ENCODE measurements at regions of chr14 and their contacts with region 1.

Region 1: GRCh38 chr14:68787092-68787992 is 5.5 kb downstream of the ZFP36L1 start:
- DNase-seq: no peak
- ATAC-seq: no peak
- H3K4me3 ChIP-seq: no peak overlapping the region
- H3K27ac ChIP-seq: peak overlapping the region; percentile 68
- H3K4me1 ChIP-seq: peaks cover 18% of the 10 kb centered on the region
- H3K27me3 ChIP-seq: no peaks in the 10 kb centered on the region
- CTCF ChIP-seq: no peak

Region 2: DNA sequence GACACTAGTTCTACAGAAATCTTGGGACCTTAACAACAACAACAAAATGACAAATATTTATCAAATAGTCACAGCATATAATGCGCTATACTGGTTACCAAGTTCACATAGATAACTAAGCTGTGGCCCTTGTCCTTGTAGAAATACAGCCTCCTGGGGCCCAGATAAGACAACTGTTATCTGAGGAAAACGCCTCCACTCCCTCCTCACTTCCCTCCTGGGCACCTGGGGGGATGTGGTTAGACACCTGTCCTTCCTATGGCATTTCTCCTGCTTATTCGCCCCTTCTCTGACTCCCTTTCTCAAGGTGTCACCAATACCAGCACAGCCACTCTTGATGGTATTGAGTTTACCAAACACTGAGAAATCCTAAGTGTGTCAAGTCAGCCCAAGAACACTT is 548.4 kb before region 1 on chr14:
- CTCF ChIA-PET with region 1: interaction called, 11 read pairs
- POLR2A ChIA-PET with region 1: interaction called, 9 read pairs
- in situ Hi-C with region 1: no loop called
- intact Hi-C with region 1: no loop called
- DNase-seq: no peak
- ATAC-seq: no peak
- H3K4me3 ChIP-seq: no peak overlapping the region
- H3K27ac ChIP-seq: peak overlapping the region; percentile 72; the same call in 1 of the 2 replicates
- H3K4me1 ChIP-seq: peaks cover 1% of the 10 kb centered on the region; the same call in 1 of the 2 replicates
- H3K27me3 ChIP-seq: no peaks in the 10 kb centered on the region
- CTCF ChIP-seq: no peak

Region 3: DNA sequence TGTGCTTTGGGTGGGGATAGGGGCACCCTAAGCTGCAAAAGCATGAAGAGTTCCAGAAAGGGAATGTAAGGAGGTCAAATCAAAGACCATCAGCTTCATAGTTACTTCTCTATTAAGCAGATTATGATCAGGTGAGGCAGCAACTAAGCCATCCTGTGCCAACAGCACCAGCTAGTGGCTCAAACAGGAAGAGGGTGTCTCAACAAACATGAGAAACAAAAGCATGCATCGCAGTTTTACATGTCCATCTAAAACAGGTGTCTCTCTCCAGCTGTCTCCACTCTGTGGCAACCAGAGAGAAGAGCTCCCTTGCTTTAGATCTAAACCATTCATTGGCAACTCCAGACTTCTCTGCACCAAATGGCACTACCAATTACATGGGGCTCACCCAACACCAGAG is 138.9 kb after region 1 on chr14:
- CTCF ChIA-PET with region 1: no interaction called
- POLR2A ChIA-PET with region 1: no interaction called
- in situ Hi-C with region 1: no loop called
- intact Hi-C with region 1: no loop called
- DNase-seq: no peak
- ATAC-seq: no peak
- H3K4me3 ChIP-seq: no peak overlapping the region
- H3K27ac ChIP-seq: no peak overlapping the region
- H3K4me1 ChIP-seq: peaks cover 10% of the 10 kb centered on the region
- H3K27me3 ChIP-seq: no peaks in the 10 kb centered on the region
- CTCF ChIP-seq: no peak; the same call in 1 of the 2 replicates